ENCODE measurements at regions of chr17 and their contacts with region 1.

Region 1: DNA sequence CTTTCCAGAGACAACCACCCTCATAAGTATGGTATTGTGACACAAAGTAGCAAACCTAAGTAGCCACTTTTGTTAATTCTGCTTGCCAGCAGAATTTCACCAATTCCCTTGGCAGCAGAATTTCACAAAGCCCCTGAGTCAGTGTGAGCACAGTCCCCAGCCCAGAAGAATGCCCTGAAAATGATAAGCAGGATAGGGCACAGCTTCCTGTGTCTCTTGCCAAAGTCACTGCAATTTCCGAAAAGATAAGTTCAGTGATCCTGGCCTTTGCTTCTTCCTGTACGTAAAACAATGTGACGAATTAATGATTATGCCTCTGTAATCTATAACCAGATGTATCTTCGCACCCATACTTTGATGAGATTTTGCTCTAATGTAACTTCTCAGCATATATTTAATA is 16.0 kb upstream of the WIPF2 start:
- DNase-seq: no peak
- ATAC-seq: no peak
- H3K4me3 Mint-ChIP-seq: no peak overlapping the region
- H3K27ac Mint-ChIP-seq: no peak overlapping the region
- H3K4me1 Mint-ChIP-seq: peaks cover 7% of the 10 kb centered on the region
- H3K27me3 Mint-ChIP-seq: peaks cover 3% of the 10 kb centered on the region
- CTCF ChIP-seq: no peak

Region 2: GRCh38 chr17:40219073-40219860 is 16.1 kb after region 1 on chr17 and contains the start of gene WIPF2:
- CTCF ChIA-PET with region 1: interaction called, 22 read pairs
- POLR2A ChIA-PET with region 1: interaction called, 4 read pairs
- intact Hi-C with region 1: no loop called
- DNase-seq: peak; percentile 98
- ATAC-seq: peak; percentile 96
- H3K4me3 Mint-ChIP-seq: peak within 1 kb of the TSS; percentile 96
- H3K27ac Mint-ChIP-seq: peak within 1 kb of the TSS; percentile 100
- H3K4me1 Mint-ChIP-seq: peaks cover 26% of the 10 kb centered on the region
- H3K27me3 Mint-ChIP-seq: no peaks in the 10 kb centered on the region
- CTCF ChIP-seq: no peak
- total RNA-seq, gene WIPF2: 15.3 to 17.9 TPM

Region 3: GRCh38 chr17:40287494-40288369 is 84.6 kb after region 1 on chr17 and contains the start of gene CDC6:
- CTCF ChIA-PET with region 1: interaction called, 27 read pairs
- POLR2A ChIA-PET with region 1: no interaction called
- intact Hi-C with region 1: loop called (anchors 5 kb)
- DNase-seq: peak; percentile 100
- ATAC-seq: peak; percentile 89
- H3K4me3 Mint-ChIP-seq: peak within 1 kb of the TSS; percentile 99
- H3K27ac Mint-ChIP-seq: peak within 1 kb of the TSS; percentile 96
- H3K4me1 Mint-ChIP-seq: peaks cover 54% of the 10 kb centered on the region
- H3K27me3 Mint-ChIP-seq: no peaks in the 10 kb centered on the region
- CTCF ChIP-seq: no peak
- total RNA-seq, gene CDC6: 110 to 118 TPM

Region 4: GRCh38 chr17:40293363-40293762 is 90.2 kb after region 1 on chr17:
- CTCF ChIA-PET with region 1: interaction called, 27 read pairs
- POLR2A ChIA-PET with region 1: interaction called, 3 read pairs
- intact Hi-C with region 1: loop called (anchors 5 kb)
- DNase-seq: no peak
- ATAC-seq: no peak
- H3K4me3 Mint-ChIP-seq: no peak overlapping the region
- H3K27ac Mint-ChIP-seq: no peak overlapping the region
- H3K4me1 Mint-ChIP-seq: peaks cover 35% of the 10 kb centered on the region
- H3K27me3 Mint-ChIP-seq: no peaks in the 10 kb centered on the region
- CTCF ChIP-seq: no peak

Region 5: GRCh38 chr17:40355123-40355803 is 152.1 kb after region 1 on chr17:
- CTCF ChIA-PET with region 1: interaction called, 15 read pairs
- POLR2A ChIA-PET with region 1: no interaction called
- intact Hi-C with region 1: no loop called
- DNase-seq: peak; percentile 84
- ATAC-seq: peak; percentile 84
- H3K4me3 Mint-ChIP-seq: no peak overlapping the region
- H3K27ac Mint-ChIP-seq: no peak overlapping the region
- H3K4me1 Mint-ChIP-seq: peaks cover 19% of the 10 kb centered on the region
- H3K27me3 Mint-ChIP-seq: no peaks in the 10 kb centered on the region
- CTCF ChIP-seq: peak; percentile 95

Region 6: GRCh38 chr17:40417609-40418427 is 214.7 kb after region 1 on chr17 and contains the start of gene TOP2A:
- CTCF ChIA-PET with region 1: no interaction called
- POLR2A ChIA-PET with region 1: no interaction called
- intact Hi-C with region 1: no loop called
- DNase-seq: peak; percentile 97
- ATAC-seq: peak; percentile 99
- H3K4me3 Mint-ChIP-seq: peak within 1 kb of the TSS; percentile 96
- H3K27ac Mint-ChIP-seq: peak within 1 kb of the TSS; percentile 93
- H3K4me1 Mint-ChIP-seq: peaks cover 20% of the 10 kb centered on the region
- H3K27me3 Mint-ChIP-seq: no peaks in the 10 kb centered on the region
- CTCF ChIP-seq: no peak
- total RNA-seq, gene TOP2A: 273 to 280 TPM